Activated CD4-positive, alpha-beta memory T cell treated with anti-CD3 and anti-CD28 coated beads for 36 hours (primary cell): ENCODE measurements at regions of chr13 and their contacts with region 1.

Region 1: GRCh38 chr13:51832471-51833152 is 12.4 kb downstream of the TMEM272 start:
- DNase-seq: peak; percentile 74
- H3K4me3 Mint-ChIP-seq: peak overlapping the region; percentile 24
- H3K27ac Mint-ChIP-seq: peak overlapping the region; percentile 40
- H3K4me1 Mint-ChIP-seq: peaks cover 29% of the 10 kb centered on the region
- H3K27me3 Mint-ChIP-seq: no peaks in the 10 kb centered on the region

Region 2: DNA sequence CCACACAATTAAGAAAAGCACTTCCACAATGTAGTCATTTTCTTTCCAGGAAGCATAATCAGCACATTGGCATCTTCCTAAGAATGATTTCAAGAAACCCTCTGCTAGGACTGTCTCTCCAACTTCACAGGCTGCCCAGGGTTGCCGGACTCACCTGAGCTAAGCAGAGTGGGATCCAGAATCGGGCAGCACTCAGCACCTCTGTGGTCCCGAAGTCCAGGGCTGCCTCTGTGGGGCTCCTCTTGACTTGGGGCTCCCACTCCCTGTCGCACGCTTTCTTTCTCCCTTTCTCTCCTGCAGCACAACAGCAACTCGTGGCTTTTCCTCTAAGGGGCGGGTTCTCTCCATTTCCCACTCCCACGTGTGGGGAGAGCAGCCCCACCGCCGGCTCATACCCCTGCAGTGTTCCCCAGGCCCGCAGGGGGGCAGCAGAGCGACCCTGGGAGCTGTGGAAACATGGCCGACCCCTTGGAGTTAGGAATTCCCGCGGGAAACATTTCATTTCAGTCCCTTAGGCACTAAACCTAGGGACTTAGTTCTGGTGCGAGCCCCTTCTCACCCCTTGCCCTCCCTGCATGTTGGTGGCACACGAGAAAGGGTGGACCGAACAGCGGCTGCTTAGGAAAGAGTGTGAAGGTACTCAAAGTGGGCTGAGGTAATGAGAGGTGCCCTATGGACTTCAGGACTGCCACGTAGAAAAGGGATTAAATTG is 12.4 kb after region 1 on chr13 and contains the start of gene TMEM272:
- CTCF ChIA-PET with region 1: interaction called, 11 read pairs
- POLR2A ChIA-PET with region 1: no interaction called
- intact Hi-C with region 1: no loop called
- DNase-seq: peak; percentile 74
- H3K4me3 Mint-ChIP-seq: peak within 1 kb of the TSS; percentile 27
- H3K27ac Mint-ChIP-seq: no peak within 1 kb of the TSS
- H3K4me1 Mint-ChIP-seq: peaks cover 16% of the 10 kb centered on the region
- H3K27me3 Mint-ChIP-seq: peaks cover 4% of the 10 kb centered on the region
- total RNA-seq, gene TMEM272: 0.10 to 0.31 TPM

Region 3: GRCh38 chr13:52348983-52349780 is 516.6 kb after region 1 on chr13:
- CTCF ChIA-PET with region 1: no interaction called
- POLR2A ChIA-PET with region 1: no interaction called
- intact Hi-C with region 1: no loop called
- DNase-seq: peak; percentile 39
- H3K4me3 Mint-ChIP-seq: no peak overlapping the region
- H3K27ac Mint-ChIP-seq: no peak overlapping the region
- H3K4me1 Mint-ChIP-seq: peaks cover 2% of the 10 kb centered on the region
- H3K27me3 Mint-ChIP-seq: peaks cover 16% of the 10 kb centered on the region